Activated CD8-positive, alpha-beta T cell treated with anti-CD3 and anti-CD28 coated beads for 36 hours (primary cell): ENCODE measurements at regions of chr15 and their contacts with region 1.

Region 1: DNA sequence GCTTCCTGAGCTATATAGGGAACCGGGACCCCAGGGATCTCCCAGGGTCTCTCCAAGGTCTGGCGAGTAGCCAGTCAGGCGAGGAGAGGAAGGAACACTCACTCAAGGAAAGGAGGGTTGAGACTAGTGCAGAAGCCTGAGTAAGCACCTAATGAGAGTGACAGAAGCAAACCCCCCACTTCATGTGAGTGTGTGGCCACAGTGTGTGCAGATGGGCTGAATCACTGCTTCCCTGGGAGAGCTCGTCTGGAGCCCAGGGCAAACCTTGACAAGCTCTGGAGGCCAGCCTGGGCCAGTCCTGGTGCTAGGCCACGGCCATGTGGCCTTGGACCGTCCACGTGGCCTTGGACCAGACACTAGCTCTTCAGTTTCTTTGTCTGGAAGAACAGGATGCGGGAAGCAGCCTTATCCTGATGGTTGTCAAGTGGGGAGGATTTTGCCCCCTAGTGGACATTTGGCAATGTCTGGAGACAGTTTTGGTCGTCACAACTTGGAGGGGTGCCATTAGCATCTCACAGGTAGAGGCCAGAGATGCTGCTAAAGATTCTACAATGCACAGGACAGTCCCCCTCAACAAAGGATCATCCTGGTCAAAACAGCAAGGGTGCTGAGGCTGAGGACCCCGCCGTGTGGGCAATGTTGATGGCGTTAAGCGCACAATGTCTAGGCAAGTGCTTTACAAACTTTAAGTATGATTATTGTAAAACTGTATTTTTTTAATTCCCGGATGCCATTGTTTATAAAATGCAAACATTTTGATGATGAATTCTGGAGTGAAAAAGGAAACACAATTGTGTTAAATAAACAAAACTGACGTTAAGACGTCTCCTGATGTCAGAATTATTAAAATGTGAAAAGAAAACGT is 34.8 kb upstream of the CTSH start:
- DNase-seq: peak; percentile 52
- ATAC-seq: peak; percentile 61
- H3K4me3 Mint-ChIP-seq: no peak overlapping the region
- H3K27ac Mint-ChIP-seq: no peak overlapping the region
- H3K4me1 Mint-ChIP-seq: no peaks in the 10 kb centered on the region
- H3K27me3 Mint-ChIP-seq: peaks cover 2% of the 10 kb centered on the region
- CTCF ChIP-seq: peak; percentile 93

Region 2: DNA sequence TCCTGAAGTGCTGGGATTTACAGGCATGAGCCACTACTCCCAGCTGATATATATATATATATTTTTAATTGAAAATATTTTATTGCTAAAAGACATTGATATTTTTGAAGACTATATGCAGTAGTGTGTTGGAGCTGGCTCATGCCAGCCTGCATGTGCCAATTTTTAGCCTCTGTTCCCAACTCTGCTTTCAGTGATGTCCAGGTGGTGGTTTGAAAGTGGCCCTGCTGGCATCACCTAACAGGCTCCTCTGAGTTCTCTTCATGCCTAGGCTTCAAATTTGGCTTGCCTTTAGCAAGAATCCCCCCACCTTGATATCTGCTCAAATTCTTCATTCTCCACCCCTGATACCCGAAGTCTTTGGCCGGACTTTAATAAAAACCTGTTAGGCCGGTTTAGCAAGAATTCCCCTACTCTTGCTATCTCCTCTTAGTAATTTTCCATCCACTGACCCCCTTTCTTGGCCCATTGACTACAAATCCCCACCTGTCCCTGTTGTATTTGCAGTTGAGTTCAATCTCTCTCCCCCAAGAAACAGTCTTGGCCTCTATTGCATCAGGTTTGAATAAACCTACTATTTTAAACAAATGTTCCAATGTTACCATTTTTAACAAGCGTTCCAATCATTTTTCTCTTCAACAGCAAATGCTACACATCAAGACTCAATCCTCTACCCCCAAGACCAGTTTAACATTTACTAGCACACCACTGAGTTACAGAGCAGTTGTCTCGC is 11.0 kb before region 1 on chr15:
- CTCF ChIA-PET with region 1: interaction called, 19 read pairs
- POLR2A ChIA-PET with region 1: no interaction called
- intact Hi-C with region 1: no loop called
- DNase-seq: no peak
- ATAC-seq: no peak
- H3K4me3 Mint-ChIP-seq: no peak overlapping the region
- H3K27ac Mint-ChIP-seq: no peak overlapping the region
- H3K4me1 Mint-ChIP-seq: peaks cover 1% of the 10 kb centered on the region
- H3K27me3 Mint-ChIP-seq: no peaks in the 10 kb centered on the region
- CTCF ChIP-seq: no peak